Aorta (tissue), 5 donors: ENCODE measurements at regions of chr3 and their contacts with region 1.

Region 1: DNA sequence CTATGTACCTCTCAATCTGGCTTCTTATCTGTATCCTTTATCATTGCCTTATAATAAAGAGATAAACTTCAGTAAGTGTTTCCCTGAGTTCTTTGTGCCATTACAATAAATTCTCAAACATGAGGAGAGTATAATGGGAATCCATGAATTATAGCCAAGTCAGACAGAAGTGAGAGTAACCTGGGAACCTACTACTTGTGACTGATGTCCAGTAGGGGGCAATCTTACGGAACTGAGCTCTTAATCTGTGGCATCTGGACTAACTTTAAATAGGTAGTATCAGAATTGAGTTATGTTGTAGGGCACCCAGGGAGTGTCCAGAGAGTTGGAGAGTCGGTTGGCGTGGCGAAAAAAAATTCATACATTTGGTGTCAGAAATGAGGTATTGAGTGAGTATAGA is 542.6 kb downstream of the ZBBX start:
- DNase-seq: no peak
- ATAC-seq: no peak
- H3K4me3 ChIP-seq: no peak overlapping the region
- H3K27ac ChIP-seq: no peak overlapping the region
- H3K4me1 ChIP-seq: no peaks in the 10 kb centered on the region
- H3K27me3 ChIP-seq: no peaks in the 10 kb centered on the region

Region 2: DNA sequence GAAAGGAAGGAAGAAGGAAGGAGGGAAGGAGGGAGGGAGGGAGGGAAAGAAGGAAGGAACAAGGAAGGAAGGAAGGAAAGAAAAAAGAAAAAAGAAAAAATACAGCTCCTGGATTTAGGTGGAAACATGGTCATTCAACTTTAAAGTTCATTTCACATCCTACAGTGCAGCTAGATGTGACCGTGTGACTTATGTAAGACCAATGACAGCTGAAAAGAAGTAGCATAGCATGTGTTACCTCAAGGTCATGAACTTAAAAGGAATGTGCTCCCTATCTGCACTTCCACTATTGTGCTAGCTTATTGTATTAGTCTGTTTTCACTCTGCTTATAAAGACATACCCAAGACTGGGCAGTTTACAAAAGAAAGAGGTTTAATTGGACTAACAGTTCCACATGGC is 62.3 kb before region 1 on chr3:
- intact Hi-C with region 1: no loop called
- DNase-seq: no peak
- ATAC-seq: no peak
- H3K4me3 ChIP-seq: no peak overlapping the region
- H3K27ac ChIP-seq: no peak overlapping the region
- H3K4me1 ChIP-seq: no peaks in the 10 kb centered on the region
- H3K27me3 ChIP-seq: no peaks in the 10 kb centered on the region

Region 3: GRCh38 chr3:166877971-166878370 is 40.4 kb after region 1 on chr3:
- intact Hi-C with region 1: no loop called
- DNase-seq: no peak
- ATAC-seq: no peak
- H3K4me3 ChIP-seq: no peak overlapping the region
- H3K27ac ChIP-seq: no peak overlapping the region
- H3K4me1 ChIP-seq: no peaks in the 10 kb centered on the region
- H3K27me3 ChIP-seq: no peaks in the 10 kb centered on the region

Region 4: DNA sequence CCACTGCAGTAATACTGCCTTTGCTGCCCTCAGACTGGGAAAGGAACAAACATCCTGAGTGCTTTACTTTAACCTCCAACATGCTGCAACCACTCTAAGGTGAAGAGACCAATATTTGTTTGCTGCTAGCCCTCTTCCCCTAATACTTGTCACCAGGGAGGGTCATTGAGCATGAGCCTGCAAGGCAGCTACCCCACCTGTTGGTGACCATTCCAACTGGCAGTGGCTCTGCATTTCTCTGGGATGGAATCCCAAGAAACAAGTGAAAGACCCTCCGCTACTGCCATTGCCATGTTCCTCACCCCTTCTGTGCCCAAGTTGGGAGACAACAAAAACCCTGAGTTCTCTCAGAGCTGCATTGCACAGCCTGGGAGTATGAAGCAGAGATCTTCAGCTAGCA is 79.9 kb after region 1 on chr3:
- intact Hi-C with region 1: no loop called
- DNase-seq: no peak
- ATAC-seq: no peak
- H3K4me3 ChIP-seq: no peak overlapping the region
- H3K27ac ChIP-seq: no peak overlapping the region
- H3K4me1 ChIP-seq: no peaks in the 10 kb centered on the region
- H3K27me3 ChIP-seq: no peaks in the 10 kb centered on the region

Region 5: DNA sequence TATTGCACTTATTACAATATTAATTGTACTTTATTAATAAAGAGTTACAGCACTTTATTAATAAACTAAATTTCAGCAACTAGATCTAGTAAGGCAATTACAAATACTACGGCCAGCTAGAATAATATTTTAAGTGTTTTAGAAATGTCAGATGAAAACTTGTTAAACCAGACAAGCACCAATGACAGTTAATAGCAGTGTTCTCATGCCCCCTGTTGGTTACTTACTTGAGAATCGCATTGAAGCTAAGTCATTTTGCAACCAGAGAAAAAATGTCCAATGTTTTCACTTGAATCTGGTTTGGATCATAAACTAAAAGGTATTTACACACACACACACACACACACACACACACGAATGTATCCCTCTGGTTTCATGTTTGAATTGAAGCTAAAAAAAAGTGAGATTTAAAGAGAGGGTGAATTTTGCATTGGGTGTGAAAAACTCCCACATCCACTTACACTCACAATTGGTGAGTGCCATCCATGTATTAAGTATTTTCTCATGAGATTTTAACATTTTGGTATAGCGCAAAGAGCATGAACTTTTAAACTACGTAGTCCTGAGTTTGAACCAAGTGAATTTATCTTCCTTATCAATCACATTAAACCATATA is 194.8 kb after region 1 on chr3:
- intact Hi-C with region 1: loop called in 1 of 2 experiments (anchors 5 kb)
- DNase-seq: no peak
- ATAC-seq: no peak
- H3K4me3 ChIP-seq: no peak overlapping the region
- H3K27ac ChIP-seq: no peak overlapping the region
- H3K4me1 ChIP-seq: no peaks in the 10 kb centered on the region
- H3K27me3 ChIP-seq: no peaks in the 10 kb centered on the region